ENCODE measurements at regions of chr6 and their contacts with region 1.

Region 1: GRCh38 chr6:152267967-152268845 is 369.0 kb downstream of the SYNE1 start:
- DNase-seq: peak; percentile 11 to 36 (median 24)
- ATAC-seq: no peak
- H3K4me3 ChIP-seq: no peak overlapping the region
- H3K27ac ChIP-seq: no peak overlapping the region
- H3K4me1 ChIP-seq: no peaks in the 10 kb centered on the region
- H3K27me3 ChIP-seq: no peaks in the 10 kb centered on the region
- CTCF ChIP-seq: peak; percentile 45 to 73 (median 50); a peak in 4 of 6 replicates
- EP300 ChIP-seq: no peak
- POLR2A ChIP-seq: no peak
- RAD21 ChIP-seq: peak; percentile 51 to 65

Region 2: GRCh38 chr6:151425561-151425960 is 842.6 kb before region 1 on chr6:
- CTCF ChIA-PET with region 1: no interaction called
- POLR2A ChIA-PET with region 1: no interaction called
- in situ Hi-C with region 1: no loop called
- intact Hi-C with region 1: loop called (anchors 10 kb)
- DNase-seq: no peak
- ATAC-seq: no peak
- H3K4me3 ChIP-seq: no peak overlapping the region
- H3K27ac ChIP-seq: no peak overlapping the region
- H3K4me1 ChIP-seq: no peaks in the 10 kb centered on the region
- H3K27me3 ChIP-seq: no peaks in the 10 kb centered on the region
- CTCF ChIP-seq: no peak
- EP300 ChIP-seq: no peak
- POLR2A ChIP-seq: no peak
- RAD21 ChIP-seq: no peak

Region 3: DNA sequence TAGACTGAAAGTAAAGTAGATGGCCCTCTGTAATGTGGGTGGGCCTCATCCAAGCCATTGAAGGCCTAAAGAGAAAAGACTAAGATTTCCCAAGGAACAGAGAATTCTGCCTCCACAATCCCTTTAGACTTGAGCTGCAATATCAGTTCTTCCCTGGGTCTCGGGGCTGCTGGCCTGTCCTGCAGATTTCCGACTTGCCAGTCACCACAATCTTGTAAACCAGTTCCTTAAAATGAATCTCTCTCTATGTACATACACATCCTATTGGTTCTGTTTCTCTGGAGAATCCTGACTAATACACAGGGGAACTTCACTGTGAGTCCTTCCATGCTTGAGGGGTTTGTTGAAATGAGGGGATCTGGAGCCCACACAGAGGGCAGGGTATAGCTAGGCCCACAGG is 761.4 kb before region 1 on chr6:
- CTCF ChIA-PET with region 1: no interaction called
- POLR2A ChIA-PET with region 1: no interaction called
- in situ Hi-C with region 1: no loop called
- intact Hi-C with region 1: no loop called
- DNase-seq: no peak
- ATAC-seq: no peak
- H3K4me3 ChIP-seq: no peak overlapping the region
- H3K27ac ChIP-seq: no peak overlapping the region
- H3K4me1 ChIP-seq: no peaks in the 10 kb centered on the region
- H3K27me3 ChIP-seq: peaks cover 16 to 39% of the 10 kb centered on the region in 2 experiments
- CTCF ChIP-seq: no peak
- EP300 ChIP-seq: no peak
- POLR2A ChIP-seq: no peak
- RAD21 ChIP-seq: no peak

Region 4: DNA sequence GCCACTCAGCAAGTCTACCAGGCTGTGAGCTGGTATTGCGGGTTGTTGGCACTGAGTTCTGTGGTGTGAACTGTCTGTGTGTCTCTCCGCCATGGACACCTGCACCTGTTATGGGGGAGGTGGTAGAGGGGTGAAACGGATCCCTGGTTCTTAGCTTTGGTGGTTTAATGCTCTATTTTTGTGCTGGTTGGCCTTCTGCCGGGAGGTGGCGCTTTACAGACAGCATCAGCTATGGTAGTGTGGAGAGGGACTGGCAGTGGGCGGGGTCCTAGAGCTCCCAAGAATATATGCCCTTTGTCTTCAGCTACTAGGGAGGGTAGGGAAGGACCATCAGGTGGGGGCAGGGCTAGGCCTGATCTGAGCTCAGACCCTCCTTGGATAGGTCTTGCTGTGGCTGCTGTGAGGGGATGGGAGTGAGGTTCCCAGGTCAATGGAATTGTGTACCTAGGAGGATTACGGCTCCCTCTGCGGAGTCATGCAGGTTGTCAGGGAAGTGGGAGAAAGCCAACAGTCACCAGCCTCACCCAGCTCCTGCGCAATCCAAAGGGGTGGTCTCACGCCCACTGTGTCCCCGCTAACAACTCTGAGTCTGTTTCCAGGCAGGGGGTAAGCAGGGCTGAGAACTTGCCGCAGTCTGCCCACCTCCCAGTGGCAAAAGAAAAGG is 620.1 kb before region 1 on chr6:
- CTCF ChIA-PET with region 1: no interaction called
- POLR2A ChIA-PET with region 1: no interaction called
- in situ Hi-C with region 1: no loop called
- intact Hi-C with region 1: loop called (anchors 1 kb)
- DNase-seq: peak in 2 of 4 experiments; percentile 21 to 62
- ATAC-seq: peak; percentile 97
- H3K4me3 ChIP-seq: no peak overlapping the region
- H3K27ac ChIP-seq: no peak overlapping the region
- H3K4me1 ChIP-seq: no peaks in the 10 kb centered on the region; a peak in 1 of 5 replicates
- H3K27me3 ChIP-seq: 0 out of 5 replicates have a peak, but pooled peaks cover 0 to 8% of the 10 kb centered on the region in 2 experiments
- CTCF ChIP-seq: peak; percentile 61 to 73 (median 67)
- EP300 ChIP-seq: no peak
- POLR2A ChIP-seq: no peak
- RAD21 ChIP-seq: peak; percentile 18 to 46; a peak in 3 of 4 replicates

Region 5: DNA sequence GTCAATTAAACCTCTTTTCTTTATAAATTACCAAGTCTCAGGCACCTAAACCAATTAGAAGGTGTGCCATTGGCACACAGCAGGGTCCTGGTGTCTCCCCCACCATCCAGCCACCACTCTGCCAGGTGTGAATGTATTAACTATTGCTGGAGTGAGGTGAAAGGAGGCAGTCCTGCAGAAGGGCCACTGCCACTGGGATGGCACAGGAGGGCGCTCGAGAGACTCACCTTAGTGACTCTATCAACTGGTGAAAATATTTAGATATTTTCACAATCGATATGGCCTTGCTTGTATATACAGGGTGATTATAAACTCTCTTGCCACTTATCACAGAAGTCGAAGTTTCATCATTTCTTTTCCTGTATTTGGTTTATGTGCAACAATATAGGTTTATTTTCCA is 606.3 kb before region 1 on chr6:
- CTCF ChIA-PET with region 1: no interaction called
- POLR2A ChIA-PET with region 1: no interaction called
- in situ Hi-C with region 1: no loop called
- intact Hi-C with region 1: loop called (anchors 5 kb)
- DNase-seq: peak in 2 of 4 experiments; percentile 29 to 32
- ATAC-seq: peak; percentile 91
- H3K4me3 ChIP-seq: no peak overlapping the region
- H3K27ac ChIP-seq: no peak overlapping the region
- H3K4me1 ChIP-seq: no peaks in the 10 kb centered on the region
- H3K27me3 ChIP-seq: no peaks in the 10 kb centered on the region
- CTCF ChIP-seq: peak; percentile 61 to 75 (median 63)
- EP300 ChIP-seq: no peak
- POLR2A ChIP-seq: no peak
- RAD21 ChIP-seq: peak in 1 of 2 experiments; percentile 34; a peak in 1 of 4 replicates

Region 6: GRCh38 chr6:151675746-151676416 is 592.3 kb before region 1 on chr6:
- CTCF ChIA-PET with region 1: no interaction called
- POLR2A ChIA-PET with region 1: no interaction called
- in situ Hi-C with region 1: no loop called
- intact Hi-C with region 1: loop called (anchors 2 kb)
- DNase-seq: peak; percentile 67 to 85 (median 80)
- ATAC-seq: peak; percentile 93
- H3K4me3 ChIP-seq: no peak overlapping the region
- H3K27ac ChIP-seq: no peak overlapping the region
- H3K4me1 ChIP-seq: no peaks in the 10 kb centered on the region; a peak in 1 of 5 replicates
- H3K27me3 ChIP-seq: peaks cover 0 to 4% of the 10 kb centered on the region in 2 experiments; a peak in 2 of 5 replicates
- CTCF ChIP-seq: peak; percentile 86 to 97 (median 89)
- EP300 ChIP-seq: no peak
- POLR2A ChIP-seq: no peak
- RAD21 ChIP-seq: peak; percentile 76 to 80

Region 7: GRCh38 chr6:151765444-151765886 is 502.7 kb before region 1 on chr6:
- CTCF ChIA-PET with region 1: interaction called, 3 read pairs
- POLR2A ChIA-PET with region 1: no interaction called
- in situ Hi-C with region 1: no loop called
- intact Hi-C with region 1: loop called (anchors 2 kb)
- DNase-seq: peak; percentile 61 to 69 (median 64)
- ATAC-seq: peak; percentile 91
- H3K4me3 ChIP-seq: no peak overlapping the region
- H3K27ac ChIP-seq: no peak overlapping the region
- H3K4me1 ChIP-seq: no peaks in the 10 kb centered on the region
- H3K27me3 ChIP-seq: no peaks in the 10 kb centered on the region
- CTCF ChIP-seq: peak; percentile 59 to 76 (median 74)
- EP300 ChIP-seq: no peak
- POLR2A ChIP-seq: no peak
- RAD21 ChIP-seq: peak; percentile 42 to 64

Region 8: DNA sequence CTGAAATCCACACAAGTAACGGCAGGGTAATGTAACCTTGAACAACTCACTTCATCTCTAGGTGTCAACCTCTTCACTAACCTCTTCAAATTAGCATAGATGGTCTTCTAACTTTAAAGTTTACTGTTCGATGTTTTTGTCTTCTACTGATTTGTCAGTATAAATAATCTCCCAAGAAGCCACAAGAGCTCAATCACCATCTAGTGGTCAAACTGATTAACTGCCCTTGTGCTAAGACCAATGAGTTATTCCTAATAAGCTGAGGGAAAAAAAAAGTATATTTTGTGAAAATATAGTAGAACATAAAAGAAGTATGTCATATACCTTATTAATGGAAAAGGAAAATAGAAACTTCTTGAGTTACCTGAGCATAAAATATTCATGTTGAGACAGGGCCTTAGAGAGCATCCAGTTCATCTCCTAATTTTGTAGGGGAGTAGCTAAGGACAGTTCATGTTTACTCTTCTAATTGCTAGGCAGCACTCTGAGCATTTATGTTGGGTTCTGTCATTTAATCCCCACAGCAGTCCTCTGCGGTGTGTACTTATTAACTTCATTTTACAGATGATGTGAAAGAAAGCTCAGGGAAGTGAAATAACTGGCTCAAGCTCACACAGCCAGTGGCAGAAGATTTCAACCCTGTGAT is 143.7 kb before region 1 on chr6:
- CTCF ChIA-PET with region 1: no interaction called
- POLR2A ChIA-PET with region 1: no interaction called
- in situ Hi-C with region 1: no loop called
- intact Hi-C with region 1: loop called (anchors 5 kb)
- DNase-seq: peak; percentile 43 to 50 (median 44)
- ATAC-seq: peak; percentile 80
- H3K4me3 ChIP-seq: no peak overlapping the region
- H3K27ac ChIP-seq: no peak overlapping the region
- H3K4me1 ChIP-seq: peaks cover 0 to 3% of the 10 kb centered on the region in 2 experiments; a peak in 1 of 5 replicates
- H3K27me3 ChIP-seq: peaks cover 2 to 14% of the 10 kb centered on the region in 2 experiments; a peak in 2 of 5 replicates
- CTCF ChIP-seq: peak; percentile 39 to 75 (median 56); a peak in 5 of 6 replicates
- EP300 ChIP-seq: no peak
- POLR2A ChIP-seq: no peak
- RAD21 ChIP-seq: peak; percentile 59 to 73; a peak in 3 of 4 replicates

Region 9: GRCh38 chr6:152209211-152209610 is 59.0 kb before region 1 on chr6:
- CTCF ChIA-PET with region 1: no interaction called
- POLR2A ChIA-PET with region 1: no interaction called
- in situ Hi-C with region 1: no loop called
- intact Hi-C with region 1: no loop called
- DNase-seq: no peak
- ATAC-seq: no peak
- H3K4me3 ChIP-seq: no peak overlapping the region
- H3K27ac ChIP-seq: no peak overlapping the region
- H3K4me1 ChIP-seq: no peaks in the 10 kb centered on the region
- H3K27me3 ChIP-seq: no peaks in the 10 kb centered on the region
- CTCF ChIP-seq: no peak
- EP300 ChIP-seq: no peak
- POLR2A ChIP-seq: no peak
- RAD21 ChIP-seq: no peak

Measured in K562 (cell line).